CD4-positive, alpha-beta memory T cell (primary cell): ENCODE measurements at regions of chr6 and their contacts with region 1.

Region 1: DNA sequence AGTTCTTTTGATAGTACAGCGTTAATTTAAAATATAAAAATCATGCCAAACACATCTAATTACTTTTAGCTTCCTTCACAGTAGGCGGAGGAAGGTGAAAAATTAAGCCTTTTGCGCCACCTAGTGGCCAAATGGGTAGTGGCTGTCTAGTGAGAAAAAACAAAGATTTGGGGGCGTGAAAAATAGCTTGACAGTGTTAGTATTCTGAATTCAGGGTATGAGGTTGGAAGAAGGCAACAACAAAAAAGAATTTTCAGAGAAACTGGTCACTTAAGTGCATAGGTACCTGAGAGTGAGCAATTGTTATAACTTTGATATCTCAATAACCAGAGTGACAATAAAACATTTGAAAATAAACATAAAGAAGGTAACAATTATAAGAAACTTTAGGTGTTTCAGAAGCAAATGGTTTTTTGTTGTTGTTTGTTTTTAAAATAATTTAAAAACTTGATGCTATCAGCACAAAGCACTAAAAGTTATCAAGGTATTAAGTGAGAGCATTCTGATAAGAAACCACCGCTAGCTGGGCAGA is 14.3 kb downstream of the PSMB9 start:
- DNase-seq: peak; percentile 80 to 85 (median 84)
- H3K4me3 ChIP-seq: no peak overlapping the region
- H3K4me3 Mint-ChIP-seq: no peak overlapping the region
- H3K27ac ChIP-seq: no peak overlapping the region
- H3K27ac Mint-ChIP-seq: peak overlapping the region in 1 of 7 donors; percentile 0
- H3K4me1 ChIP-seq: peaks cover 21% of the 10 kb centered on the region
- H3K4me1 Mint-ChIP-seq: peaks cover 19 to 35% (median 28%) of the 10 kb centered on the region in 4 donors
- H3K27me3 ChIP-seq: no peaks in the 10 kb centered on the region
- H3K27me3 Mint-ChIP-seq: peaks cover 0 to 3% of the 10 kb centered on the region in 2 donors

Region 2: GRCh38 chr6:32432050-32432450 is 436.3 kb before region 1 on chr6:
- CTCF ChIA-PET with region 1: interaction called, 4 read pairs
- POLR2A ChIA-PET with region 1: no interaction called
- intact Hi-C with region 1: loop called (anchors 5 kb)
- DNase-seq: peak in 4 of 5 donors; percentile 28 to 41 (median 36)
- H3K4me3 ChIP-seq: no peak overlapping the region
- H3K4me3 Mint-ChIP-seq: no peak overlapping the region
- H3K27ac ChIP-seq: no peak overlapping the region
- H3K27ac Mint-ChIP-seq: no peak overlapping the region
- H3K4me1 ChIP-seq: no peaks in the 10 kb centered on the region
- H3K4me1 Mint-ChIP-seq: no peaks in the 10 kb centered on the region
- H3K27me3 ChIP-seq: peaks cover 4% of the 10 kb centered on the region
- H3K27me3 Mint-ChIP-seq: peaks cover 5 to 11% of the 10 kb centered on the region in 2 donors

Region 3: GRCh38 chr6:32796848-32797776 is 71.2 kb before region 1 on chr6:
- CTCF ChIA-PET with region 1: interaction called, 11 read pairs
- POLR2A ChIA-PET with region 1: no interaction called
- intact Hi-C with region 1: loop called (anchors 1 kb)
- DNase-seq: peak; percentile 60 to 71 (median 65)
- H3K4me3 ChIP-seq: no peak overlapping the region
- H3K4me3 Mint-ChIP-seq: peak overlapping the region in 7 of 8 donors; percentile 33 to 79 (median 65)
- H3K27ac ChIP-seq: no peak overlapping the region
- H3K27ac Mint-ChIP-seq: no peak overlapping the region
- H3K4me1 ChIP-seq: peaks cover 9% of the 10 kb centered on the region
- H3K4me1 Mint-ChIP-seq: peaks cover 10 to 20% (median 13%) of the 10 kb centered on the region in 4 donors
- H3K27me3 ChIP-seq: peaks cover 23% of the 10 kb centered on the region
- H3K27me3 Mint-ChIP-seq: peaks cover 41 to 63% of the 10 kb centered on the region in 2 donors

Region 4: GRCh38 chr6:32843979-32844838 is 24.1 kb before region 1 on chr6 and contains the start of gene PSMB8:
- CTCF ChIA-PET with region 1: interaction called, 263 read pairs
- POLR2A ChIA-PET with region 1: interaction called, 1,160 read pairs
- intact Hi-C with region 1: no loop called
- DNase-seq: peak; percentile 97 to 100 (median 98)
- H3K4me3 ChIP-seq: peak within 1 kb of the TSS; percentile 89 to 98
- H3K4me3 Mint-ChIP-seq: peak within 1 kb of the TSS; percentile 94 to 100 (median 97)
- H3K27ac ChIP-seq: peak within 1 kb of the TSS; percentile 99
- H3K27ac Mint-ChIP-seq: peak within 1 kb of the TSS; percentile 99 to 100 (median 99)
- H3K4me1 ChIP-seq: peaks cover 81% of the 10 kb centered on the region
- H3K4me1 Mint-ChIP-seq: peaks cover 61 to 98% (median 72%) of the 10 kb centered on the region in 4 donors
- H3K27me3 ChIP-seq: no peaks in the 10 kb centered on the region
- H3K27me3 Mint-ChIP-seq: no peaks in the 10 kb centered on the region
- total RNA-seq, gene PSMB8: 134 to 138 TPM

Region 5: GRCh38 chr6:32885698-32886286 is 17.5 kb after region 1 on chr6:
- CTCF ChIA-PET with region 1: interaction called, 12 read pairs
- POLR2A ChIA-PET with region 1: no interaction called
- intact Hi-C with region 1: no loop called
- DNase-seq: peak in 4 of 5 donors; percentile 64 to 75 (median 69)
- H3K4me3 ChIP-seq: no peak overlapping the region
- H3K4me3 Mint-ChIP-seq: no peak overlapping the region
- H3K27ac ChIP-seq: no peak overlapping the region
- H3K27ac Mint-ChIP-seq: no peak overlapping the region
- H3K4me1 ChIP-seq: no peaks in the 10 kb centered on the region
- H3K4me1 Mint-ChIP-seq: no peaks in the 10 kb centered on the region
- H3K27me3 ChIP-seq: no peaks in the 10 kb centered on the region
- H3K27me3 Mint-ChIP-seq: no peaks in the 10 kb centered on the region

Region 6: DNA sequence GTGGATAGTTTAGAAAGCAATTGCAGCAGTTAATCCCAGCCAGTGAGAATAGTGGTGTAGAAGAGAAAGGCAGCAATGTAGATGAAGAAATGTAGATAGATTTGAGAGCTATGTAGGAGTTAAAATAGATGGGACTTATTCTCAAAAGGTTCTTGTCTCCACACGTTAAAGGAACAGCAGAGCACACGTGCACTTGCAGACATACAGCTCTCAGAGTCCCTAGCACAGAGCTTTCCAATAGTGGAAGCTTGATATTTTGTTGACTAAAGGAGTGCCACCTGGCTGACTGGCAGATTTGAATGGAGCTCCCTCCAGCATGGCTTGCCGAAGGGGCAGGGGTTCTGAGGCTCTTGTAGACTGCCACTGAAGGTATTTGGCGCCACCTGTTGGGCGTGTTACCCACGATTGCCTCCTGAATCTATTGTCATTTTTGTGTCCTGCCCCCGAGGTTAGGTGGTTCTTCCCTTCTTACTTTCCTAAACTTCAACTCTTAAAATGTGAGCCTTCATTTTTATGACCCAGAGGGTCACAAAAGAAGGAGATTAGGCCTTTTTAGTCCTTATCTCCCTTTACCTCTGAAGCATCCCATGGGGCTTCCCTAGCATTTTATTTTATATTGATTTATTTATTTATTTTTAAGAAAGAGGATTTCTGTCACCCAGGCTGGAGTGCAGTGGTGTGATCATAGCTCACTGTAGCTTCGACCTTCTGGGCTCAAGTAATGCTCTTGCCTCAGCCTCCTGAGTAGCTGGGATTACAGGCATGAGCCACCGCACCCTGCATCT is 116.5 kb after region 1 on chr6:
- CTCF ChIA-PET with region 1: interaction called, 37 read pairs
- POLR2A ChIA-PET with region 1: interaction called, 6 read pairs
- intact Hi-C with region 1: no loop called
- DNase-seq: peak; percentile 83 to 88 (median 84)
- H3K4me3 ChIP-seq: no peak overlapping the region
- H3K4me3 Mint-ChIP-seq: no peak overlapping the region
- H3K27ac ChIP-seq: no peak overlapping the region
- H3K27ac Mint-ChIP-seq: peak overlapping the region; percentile 3 to 82 (median 45)
- H3K4me1 ChIP-seq: peaks cover 9% of the 10 kb centered on the region
- H3K4me1 Mint-ChIP-seq: peaks cover 18 to 34% (median 21%) of the 10 kb centered on the region in 4 donors
- H3K27me3 ChIP-seq: no peaks in the 10 kb centered on the region
- H3K27me3 Mint-ChIP-seq: no peaks in the 10 kb centered on the region